Mucosa of descending colon (tissue), 3 donors: ENCODE measurements at regions of chr3 and their contacts with region 1.

Region 1: GRCh38 chr3:138118612-138119422 is 3.4 kb upstream of the DZIP1L start:
- DNase-seq: peak in 2 of 3 donors; percentile 75 to 84
- ATAC-seq: peak; percentile 80
- H3K4me3 ChIP-seq: no peak overlapping the region
- H3K4me1 ChIP-seq: no peaks in the 10 kb centered on the region
- CTCF ChIP-seq: peak; percentile 64

Region 2: GRCh38 chr3:138068579-138069174 is 50.1 kb before region 1 on chr3:
- intact Hi-C with region 1: loop called (anchors 5 kb)
- DNase-seq: peak; percentile 73 to 79 (median 73)
- ATAC-seq: peak; percentile 91
- H3K4me3 ChIP-seq: no peak overlapping the region
- H3K4me1 ChIP-seq: no peaks in the 10 kb centered on the region
- CTCF ChIP-seq: peak; percentile 90

Region 3: GRCh38 chr3:138174421-138175122 is 55.8 kb after region 1 on chr3 and contains the start of gene DBR1:
- intact Hi-C with region 1: no loop called
- DNase-seq: peak; percentile 82 to 94 (median 86)
- ATAC-seq: peak; percentile 97
- H3K4me3 ChIP-seq: peak within 1 kb of the TSS; percentile 58
- H3K4me1 ChIP-seq: peaks cover 11% of the 10 kb centered on the region
- CTCF ChIP-seq: no peak
- total RNA-seq, gene DBR1: 10.5 to 11.6 (median 11.6) TPM